HepG2 (cell line): ENCODE measurements at regions of chr22 and their contacts with region 1.

Region 1: DNA sequence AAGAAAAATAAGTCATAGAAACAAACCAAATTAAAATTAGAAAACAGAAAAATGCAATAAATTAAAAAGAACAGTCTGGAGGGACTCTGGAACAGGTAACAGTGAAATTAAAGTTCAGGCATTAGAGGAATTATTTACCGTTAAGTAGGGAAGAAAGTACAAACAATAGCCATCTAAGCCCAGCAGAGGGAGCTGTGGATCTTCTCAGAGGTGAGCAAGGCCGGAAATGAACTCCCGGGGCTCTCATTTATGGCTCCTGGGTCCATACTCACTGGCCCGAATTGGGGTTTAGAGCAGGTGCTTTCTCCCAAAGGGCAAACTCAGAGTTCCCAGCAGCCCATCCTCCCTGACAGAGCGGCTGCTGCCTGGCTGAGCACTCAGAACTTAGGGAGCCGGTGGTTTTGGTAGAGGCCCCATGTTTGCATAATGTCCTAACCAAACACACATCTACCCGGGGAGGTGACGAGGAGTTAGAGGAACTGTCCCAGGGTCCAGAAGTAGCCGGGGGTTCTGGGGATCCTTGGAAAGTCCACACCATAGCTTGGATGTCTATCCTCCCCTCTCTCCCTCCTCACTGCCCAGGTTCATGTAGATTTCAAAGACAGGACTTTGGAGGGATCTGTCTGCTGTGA is 87.8 kb upstream of the VPREB1 start:
- DNase-seq: peak; percentile 70
- ATAC-seq: peak; percentile 80
- H3K4me3 ChIP-seq: peak overlapping the region; percentile 43 to 65 (median 55); a peak in 5 of 6 replicates
- H3K27ac ChIP-seq: no peak overlapping the region
- H3K4me1 ChIP-seq: peaks cover 8% of the 10 kb centered on the region
- H3K27me3 ChIP-seq: peaks cover 0 to 8% of the 10 kb centered on the region in 2 experiments; a peak in 1 of 5 replicates
- CTCF ChIP-seq: peak; percentile 80
- EP300 ChIP-seq: no peak
- POLR2A ChIP-seq: no peak
- RAD21 ChIP-seq: peak; percentile 39; the same call in 1 of the 2 replicates

Region 2: DNA sequence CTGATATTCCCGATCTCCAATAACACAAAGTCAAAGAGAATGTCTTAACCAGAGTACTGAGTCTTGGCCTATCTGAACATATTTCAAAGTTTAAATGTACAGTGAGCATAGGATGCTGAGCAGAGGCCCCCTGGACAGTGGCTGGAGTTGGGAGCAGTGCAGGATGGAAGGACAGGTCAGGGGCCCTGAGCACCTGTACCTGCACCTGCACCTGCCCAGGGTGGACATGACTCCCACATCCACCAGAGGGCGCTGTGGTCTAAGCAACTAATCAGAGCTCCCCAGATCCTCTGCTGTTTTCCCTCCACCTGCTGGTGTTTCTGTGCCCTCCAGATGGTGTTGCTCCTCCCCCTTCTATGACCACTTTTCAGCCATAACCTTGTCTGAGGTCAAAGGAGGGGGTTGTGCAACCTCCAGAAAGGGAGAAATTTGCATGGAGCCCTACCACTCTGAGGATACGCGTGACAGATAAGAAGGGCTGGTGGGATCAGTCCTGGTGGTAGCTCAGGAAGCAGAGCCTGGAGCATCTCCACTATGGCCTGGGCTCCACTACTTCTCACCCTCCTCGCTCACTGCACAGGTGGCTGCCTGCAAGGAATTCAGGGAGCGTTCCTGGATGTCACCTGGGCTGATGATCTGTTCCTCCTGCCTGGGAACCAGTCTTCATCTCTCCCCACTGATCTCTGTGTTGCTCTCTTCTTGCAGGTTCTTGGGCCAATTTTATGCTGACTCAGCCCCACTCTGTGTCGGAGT is 38.6 kb after region 1 on chr22:
- CTCF ChIA-PET with region 1: interaction called, 3 read pairs
- POLR2A ChIA-PET with region 1: no interaction called
- in situ Hi-C with region 1: no loop called
- intact Hi-C with region 1: loop called (anchors 2 kb)
- DNase-seq: peak; percentile 83
- ATAC-seq: peak; percentile 99
- H3K4me3 ChIP-seq: no peak overlapping the region
- H3K27ac ChIP-seq: no peak overlapping the region
- H3K4me1 ChIP-seq: no peaks in the 10 kb centered on the region
- H3K27me3 ChIP-seq: peaks cover 1 to 19% of the 10 kb centered on the region in 2 experiments; a peak in 4 of 5 replicates
- CTCF ChIP-seq: peak; percentile 86
- EP300 ChIP-seq: no peak
- POLR2A ChIP-seq: no peak
- RAD21 ChIP-seq: peak; percentile 83